Activated CD8-positive, alpha-beta T cell treated with anti-CD3 and anti-CD28 coated beads, Interleukin-2, amount 10 ng/mL, durations not matched to agents 7 days and 5 days (primary cell): ENCODE measurements at regions of chr15 and their contacts with region 1.

Region 1: DNA sequence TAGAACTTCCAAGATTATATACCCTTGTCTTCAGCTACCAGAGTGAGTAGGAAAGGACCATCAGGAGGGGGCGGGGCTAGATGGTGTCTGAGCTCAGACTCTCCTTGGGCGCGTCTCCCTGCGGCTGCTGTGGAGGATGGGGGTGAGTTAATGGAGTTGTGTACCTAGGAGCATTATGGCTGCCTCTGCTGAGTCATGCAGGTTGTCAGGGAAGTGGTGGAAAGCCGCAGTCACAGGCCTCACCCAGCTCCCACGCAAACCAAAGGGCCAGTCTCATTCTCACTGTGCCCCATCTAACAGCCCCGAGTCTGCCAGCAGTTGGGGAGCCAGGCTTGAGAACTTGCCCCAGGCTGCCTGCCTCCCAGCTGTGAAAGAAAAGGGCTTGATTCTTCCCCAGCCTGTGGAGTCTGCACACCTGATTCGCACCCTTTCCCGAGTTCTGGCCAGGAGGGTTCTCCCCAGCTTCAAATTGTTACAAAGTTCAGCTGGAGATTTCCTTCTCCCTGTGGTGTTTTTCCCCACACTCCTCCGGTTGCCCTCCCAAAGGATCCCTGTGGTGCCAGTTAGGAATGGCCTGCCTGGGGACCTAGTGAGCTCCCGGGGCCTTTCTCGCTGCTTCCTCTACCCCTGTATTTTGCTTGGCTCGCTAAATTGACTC is 143.3 kb downstream of the HCN4 start:
- DNase-seq: peak; percentile 30
- ATAC-seq: no peak
- H3K4me3 Mint-ChIP-seq: no peak overlapping the region
- H3K27ac Mint-ChIP-seq: no peak overlapping the region
- H3K4me1 Mint-ChIP-seq: peaks cover 4% of the 10 kb centered on the region
- H3K27me3 Mint-ChIP-seq: peaks cover 2% of the 10 kb centered on the region

Region 2: GRCh38 chr15:73240866-73241499 is 15.5 kb after region 1 on chr15:
- CTCF ChIA-PET with region 1: interaction called, 23 read pairs
- POLR2A ChIA-PET with region 1: no interaction called
- DNase-seq: peak; percentile 83
- ATAC-seq: peak; percentile 51
- H3K4me3 Mint-ChIP-seq: no peak overlapping the region
- H3K27ac Mint-ChIP-seq: no peak overlapping the region
- H3K4me1 Mint-ChIP-seq: no peaks in the 10 kb centered on the region
- H3K27me3 Mint-ChIP-seq: peaks cover 5% of the 10 kb centered on the region